Mammary epithelial cell (primary cell): ENCODE measurements at regions of chr4 and their contacts with region 1.

Region 1: GRCh38 chr4:83582289-83582769 is 46.4 kb downstream of the GPAT3 start:
- DNase-seq: peak; percentile 72
- H3K4me3 ChIP-seq: no peak overlapping the region
- H3K27ac ChIP-seq: no peak overlapping the region
- H3K4me1 ChIP-seq: peaks cover 10% of the 10 kb centered on the region
- H3K27me3 ChIP-seq: no peaks in the 10 kb centered on the region
- CTCF ChIP-seq: peak; percentile 1 to 42

Region 2: DNA sequence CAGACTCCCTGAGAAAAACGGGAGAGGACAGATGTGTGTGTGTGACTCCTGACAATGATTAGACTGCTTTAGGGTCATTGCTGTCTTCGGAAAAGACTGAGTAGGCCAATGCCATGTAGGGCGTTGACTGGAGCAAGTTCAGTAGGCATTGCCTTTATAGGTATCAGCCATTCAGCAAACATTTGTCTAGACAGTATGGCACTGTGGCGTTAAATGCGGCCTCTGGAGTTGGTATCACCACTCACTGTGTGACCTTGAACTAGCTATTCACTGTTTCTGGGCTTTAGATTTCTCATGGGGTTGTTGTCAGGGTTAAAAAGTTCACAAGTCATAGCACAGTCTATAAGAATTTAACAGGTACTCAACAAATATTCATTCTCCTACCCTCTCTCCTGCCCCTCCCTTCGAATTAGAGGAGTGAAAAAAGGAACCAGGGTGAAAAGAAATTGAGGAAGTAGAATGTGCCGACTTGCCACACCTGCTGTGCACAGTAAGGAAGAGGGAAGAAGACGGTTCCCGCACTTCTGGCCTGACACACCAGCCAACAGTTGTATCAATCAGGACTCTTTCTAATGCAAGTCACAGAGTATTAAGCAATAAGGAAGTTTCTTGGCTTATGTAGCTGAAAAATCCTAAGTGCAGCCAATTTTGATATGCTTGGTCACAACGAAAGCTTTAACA is 384.6 kb before region 1 on chr4:
- CTCF ChIA-PET with region 1: no interaction called
- dilution Hi-C with region 1: no loop called
- in situ Hi-C with region 1: no loop called
- intact Hi-C with region 1: no loop called
- DNase-seq: no peak
- H3K4me3 ChIP-seq: no peak overlapping the region
- H3K27ac ChIP-seq: no peak overlapping the region
- H3K4me1 ChIP-seq: no peaks in the 10 kb centered on the region
- H3K27me3 ChIP-seq: no peaks in the 10 kb centered on the region
- CTCF ChIP-seq: no peak

Region 3: DNA sequence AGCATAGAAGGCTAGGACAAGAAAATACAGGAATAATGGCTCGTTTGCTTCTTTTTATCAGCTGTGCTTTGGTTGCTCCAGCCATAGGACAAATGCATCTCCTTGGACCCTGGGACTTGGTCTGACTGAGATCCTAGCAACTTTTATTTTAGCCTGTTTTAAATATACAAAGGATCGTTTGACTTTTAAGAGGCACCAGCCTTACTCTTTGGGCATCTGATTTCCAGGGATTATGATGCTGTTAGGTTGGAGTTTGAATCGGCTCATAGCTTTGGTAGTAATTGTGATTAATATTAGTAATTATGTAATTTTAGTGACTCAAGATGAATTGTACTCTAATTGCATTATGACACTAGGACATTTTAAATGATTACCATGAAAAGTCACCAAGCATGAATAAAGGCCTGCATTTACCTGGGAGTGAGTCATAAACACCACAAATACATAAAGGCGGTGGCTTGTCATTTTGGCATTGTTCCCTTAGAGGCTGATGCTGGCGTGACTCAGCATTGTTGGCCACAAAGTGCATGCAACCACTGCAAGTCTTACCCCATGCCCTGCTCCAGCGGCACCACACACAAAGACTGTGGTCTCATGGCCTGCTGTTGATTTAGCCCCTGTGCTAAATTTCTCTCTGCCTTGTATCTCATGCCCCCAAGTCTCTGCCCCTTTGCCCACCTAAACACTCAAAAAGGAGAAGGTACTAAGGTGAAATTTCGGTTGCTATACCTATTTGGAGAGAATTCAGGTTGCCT is 34.0 kb before region 1 on chr4:
- CTCF ChIA-PET with region 1: no interaction called
- dilution Hi-C with region 1: no loop called
- in situ Hi-C with region 1: no loop called
- intact Hi-C with region 1: loop called (anchors 1 kb)
- DNase-seq: peak; percentile 99
- H3K4me3 ChIP-seq: no peak overlapping the region
- H3K27ac ChIP-seq: peak overlapping the region; percentile 79
- H3K4me1 ChIP-seq: peaks cover 41% of the 10 kb centered on the region
- H3K27me3 ChIP-seq: no peaks in the 10 kb centered on the region
- CTCF ChIP-seq: no peak

Region 4: DNA sequence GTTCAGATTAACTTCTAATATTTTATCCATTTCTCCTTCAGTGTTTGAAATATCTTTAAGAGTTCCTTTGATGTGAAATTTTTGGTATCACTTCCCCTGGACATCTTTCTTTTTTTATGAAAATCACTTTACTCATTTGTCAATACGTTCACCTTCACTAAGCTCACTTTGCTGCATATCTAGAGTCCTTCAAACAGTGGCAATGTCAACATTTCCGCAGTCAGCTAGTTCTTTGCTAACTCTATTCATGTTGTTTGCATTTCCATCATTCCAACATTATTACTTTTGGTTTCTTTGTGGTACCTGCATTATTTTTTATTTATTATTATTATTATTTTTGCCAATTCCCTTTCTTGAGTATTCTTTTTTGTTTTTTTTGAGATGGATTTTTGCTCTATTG is 156.6 kb after region 1 on chr4:
- CTCF ChIA-PET with region 1: no interaction called
- dilution Hi-C with region 1: no loop called
- in situ Hi-C with region 1: no loop called
- intact Hi-C with region 1: no loop called
- DNase-seq: no peak
- H3K4me3 ChIP-seq: no peak overlapping the region
- H3K27ac ChIP-seq: no peak overlapping the region
- H3K4me1 ChIP-seq: no peaks in the 10 kb centered on the region
- H3K27me3 ChIP-seq: peaks cover 10% of the 10 kb centered on the region
- CTCF ChIP-seq: no peak